Natural killer cell (primary cell): ENCODE measurements at regions of chr6 and their contacts with region 1.

Region 1: DNA sequence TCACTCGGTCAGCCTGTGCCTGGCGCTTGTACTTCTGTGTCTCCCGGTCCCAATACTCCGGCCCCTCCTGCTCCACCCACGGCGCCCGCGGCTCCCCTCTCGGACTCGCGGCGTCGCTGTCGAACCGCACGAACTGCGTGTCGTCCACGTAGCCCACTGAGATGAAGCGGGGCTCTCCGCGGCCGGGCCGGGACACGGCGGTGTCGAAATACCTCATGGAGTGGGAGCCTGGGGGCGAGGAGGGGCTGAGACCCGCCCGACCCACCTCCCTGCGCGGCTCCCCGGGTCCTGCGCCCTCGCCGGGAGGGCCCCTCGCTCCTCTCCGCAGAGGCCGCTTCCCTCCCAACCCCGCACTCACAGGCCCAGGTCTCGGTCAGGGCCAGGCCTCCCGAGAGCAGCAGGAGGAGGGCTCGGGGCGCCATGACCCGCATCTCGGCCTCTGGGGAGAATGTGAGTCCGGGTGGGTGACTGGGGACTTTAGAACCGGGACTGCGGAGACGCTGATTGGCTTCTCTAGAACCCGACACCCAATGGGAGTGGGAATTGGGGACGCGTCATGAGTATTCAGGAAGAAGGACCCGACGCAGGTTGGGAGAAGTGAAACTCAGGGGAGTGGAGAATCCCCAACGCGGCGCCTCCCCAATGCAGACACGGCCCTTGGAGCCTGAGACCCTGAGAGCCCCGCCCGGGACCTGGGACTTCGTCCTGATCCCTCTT is at the start of gene HLA-C:
- DNase-seq: peak; percentile 86 to 98
- ATAC-seq: peak; percentile 78 to 88 (median 81)
- H3K4me3 ChIP-seq: peak within 1 kb of the TSS; percentile 74
- H3K4me3 Mint-ChIP-seq: peak within 1 kb of the TSS; percentile 97
- H3K27ac ChIP-seq: peak within 1 kb of the TSS; percentile 99
- H3K27ac Mint-ChIP-seq: peak within 1 kb of the TSS; percentile 99 to 100
- H3K4me1 ChIP-seq: peaks cover 44% of the 10 kb centered on the region
- H3K4me1 Mint-ChIP-seq: peaks cover 71 to 78% of the 10 kb centered on the region in 2 donors
- H3K27me3 ChIP-seq: no peaks in the 10 kb centered on the region
- H3K27me3 Mint-ChIP-seq: peaks cover 3 to 7% of the 10 kb centered on the region in 2 donors
- CTCF ChIP-seq: no peak
- total RNA-seq, gene HLA-C: 2,828 to 3,894 (median 3,245) TPM

Region 2: GRCh38 chr6:31180502-31180901 is 91.3 kb before region 1 on chr6:
- intact Hi-C with region 1: no loop called
- DNase-seq: peak; percentile 66 to 87
- ATAC-seq: peak; percentile 98 to 99 (median 99)
- H3K4me3 ChIP-seq: peak overlapping the region; percentile 63
- H3K4me3 Mint-ChIP-seq: peak overlapping the region; percentile 85
- H3K27ac ChIP-seq: peak overlapping the region; percentile 9
- H3K27ac Mint-ChIP-seq: peak overlapping the region; percentile 51 to 87
- H3K4me1 ChIP-seq: peaks cover 16% of the 10 kb centered on the region
- H3K4me1 Mint-ChIP-seq: peaks cover 9 to 23% of the 10 kb centered on the region in 2 donors
- H3K27me3 ChIP-seq: no peaks in the 10 kb centered on the region
- H3K27me3 Mint-ChIP-seq: no peaks in the 10 kb centered on the region
- CTCF ChIP-seq: no peak

Region 3: GRCh38 chr6:31204751-31205145 is 67.1 kb before region 1 on chr6:
- intact Hi-C with region 1: loop called (anchors 1 kb)
- DNase-seq: no peak
- ATAC-seq: no peak
- H3K4me3 ChIP-seq: no peak overlapping the region
- H3K4me3 Mint-ChIP-seq: peak overlapping the region; percentile 97
- H3K27ac ChIP-seq: peak overlapping the region; percentile 76
- H3K27ac Mint-ChIP-seq: peak overlapping the region; percentile 97 to 99
- H3K4me1 ChIP-seq: peaks cover 37% of the 10 kb centered on the region
- H3K4me1 Mint-ChIP-seq: peaks cover 22 to 40% of the 10 kb centered on the region in 2 donors
- H3K27me3 ChIP-seq: no peaks in the 10 kb centered on the region
- H3K27me3 Mint-ChIP-seq: no peaks in the 10 kb centered on the region
- CTCF ChIP-seq: no peak

Region 4: DNA sequence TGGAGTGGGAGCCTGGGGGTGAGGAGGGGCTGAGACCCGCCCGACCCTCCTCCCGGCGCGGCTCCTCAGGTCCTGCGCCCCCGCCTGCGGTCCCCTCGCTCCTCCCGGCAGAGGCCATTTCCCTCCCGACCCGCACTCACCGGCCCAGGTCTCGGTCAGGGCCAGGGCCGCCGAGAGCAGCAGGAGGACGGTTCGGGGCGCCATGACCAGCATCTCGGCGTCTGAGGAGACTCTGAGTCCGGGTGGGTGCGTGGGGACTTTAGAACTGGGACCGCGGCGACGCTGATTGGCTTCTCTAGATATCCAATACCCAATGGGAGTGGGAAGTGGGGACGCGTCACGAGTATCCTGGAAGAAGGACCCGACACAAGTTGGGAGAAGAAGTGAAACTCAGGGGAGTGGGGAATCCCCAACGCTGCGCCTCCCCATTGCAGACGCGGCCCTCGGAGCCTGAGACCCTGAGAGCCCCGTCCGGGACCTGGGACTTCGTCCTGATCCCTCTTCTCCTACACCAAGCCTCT is 85.2 kb after region 1 on chr6 and contains the start of gene HLA-B:
- intact Hi-C with region 1: loop called (anchors 1 kb)
- DNase-seq: peak; percentile 83 to 96
- ATAC-seq: peak; percentile 73 to 88 (median 81)
- H3K4me3 ChIP-seq: peak within 1 kb of the TSS; percentile 99
- H3K4me3 Mint-ChIP-seq: peak within 1 kb of the TSS; percentile 97
- H3K27ac ChIP-seq: peak within 1 kb of the TSS; percentile 100
- H3K27ac Mint-ChIP-seq: peak within 1 kb of the TSS; percentile 100
- H3K4me1 ChIP-seq: peaks cover 50% of the 10 kb centered on the region
- H3K4me1 Mint-ChIP-seq: peaks cover 61 to 68% of the 10 kb centered on the region in 2 donors
- H3K27me3 ChIP-seq: no peaks in the 10 kb centered on the region
- H3K27me3 Mint-ChIP-seq: peaks cover 6 to 15% of the 10 kb centered on the region in 2 donors
- CTCF ChIP-seq: no peak
- total RNA-seq, gene HLA-B: 9,586 to 11,061 (median 11,048) TPM

Region 5: DNA sequence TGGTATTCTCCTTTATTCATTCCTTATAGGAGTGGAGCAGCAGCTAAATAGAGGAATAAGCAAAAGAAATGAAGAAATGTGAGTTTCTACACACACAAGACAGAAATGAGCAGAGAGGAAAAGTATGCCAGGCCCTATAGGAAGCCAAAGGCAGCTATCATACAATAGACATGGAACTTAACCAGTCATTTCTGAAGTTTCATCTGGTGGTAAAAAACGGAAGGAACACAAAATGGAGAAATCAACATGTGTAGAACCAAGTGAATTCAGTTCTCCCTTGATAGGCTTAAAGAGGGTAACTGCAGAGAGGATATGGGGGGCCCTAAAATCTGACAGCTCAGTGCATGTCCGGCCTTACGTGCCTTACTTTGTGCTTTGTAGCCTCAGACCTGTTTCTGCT is 1055.3 kb after region 1 on chr6:
- intact Hi-C with region 1: no loop called
- DNase-seq: no peak
- ATAC-seq: no peak
- H3K4me3 ChIP-seq: no peak overlapping the region
- H3K4me3 Mint-ChIP-seq: no peak overlapping the region
- H3K27ac ChIP-seq: no peak overlapping the region
- H3K27ac Mint-ChIP-seq: no peak overlapping the region
- H3K4me1 ChIP-seq: no peaks in the 10 kb centered on the region
- H3K4me1 Mint-ChIP-seq: peaks cover 0 to 5% of the 10 kb centered on the region in 2 donors
- H3K27me3 ChIP-seq: peaks cover 3% of the 10 kb centered on the region
- H3K27me3 Mint-ChIP-seq: peaks cover 3 to 19% of the 10 kb centered on the region in 2 donors
- CTCF ChIP-seq: no peak